PC-3 (cell line): ENCODE measurements at regions of chr13 and their contacts with region 1.

Region 1: DNA sequence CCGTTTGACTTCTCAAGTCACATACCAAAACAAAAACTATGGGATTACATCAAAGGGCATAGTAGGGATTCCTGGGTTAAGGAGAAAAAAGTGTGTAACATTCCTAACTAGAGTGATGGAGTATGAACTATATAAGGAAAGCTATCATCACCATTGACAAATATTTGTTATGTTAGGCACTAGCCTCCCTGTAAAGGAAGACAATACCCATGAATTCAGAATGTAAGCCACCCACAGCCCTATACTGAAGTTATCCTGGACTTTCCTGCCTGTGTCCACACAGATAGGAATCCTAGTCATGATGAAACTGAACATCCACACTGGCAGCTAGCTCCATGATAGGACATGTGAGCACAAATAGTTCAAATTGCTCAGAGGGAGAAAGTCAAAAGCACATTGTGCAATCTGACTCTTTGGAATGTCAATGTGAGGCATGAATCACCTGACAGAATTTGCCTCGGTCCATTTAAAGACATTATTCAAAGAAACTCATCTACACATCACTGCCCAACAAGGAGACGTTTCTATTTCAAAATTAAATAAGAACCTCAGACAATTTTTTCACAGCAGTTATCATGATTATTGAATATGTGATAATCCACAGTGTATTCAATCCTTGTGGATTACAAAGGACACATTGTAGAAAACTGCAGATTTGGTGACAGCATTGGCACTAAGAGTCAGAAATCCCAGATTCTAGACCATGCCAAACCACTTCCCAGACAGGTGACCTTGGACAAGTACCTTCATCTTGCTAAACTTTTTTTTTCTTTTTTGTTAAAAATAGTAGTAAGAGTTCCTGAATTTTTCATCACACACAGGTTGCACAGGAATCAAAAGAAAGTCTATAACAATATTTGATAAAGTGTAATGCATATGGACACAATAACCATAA is 529.3 kb downstream of the IRS2 start:
- DNase-seq: peak; percentile 93
- ATAC-seq: peak; percentile 88
- H3K4me3 ChIP-seq: no peak overlapping the region
- H3K27ac ChIP-seq: peak overlapping the region; percentile 85
- H3K4me1 ChIP-seq: peaks cover 32% of the 10 kb centered on the region
- H3K27me3 ChIP-seq: no peaks in the 10 kb centered on the region
- CTCF ChIP-seq: no peak

Region 2: DNA sequence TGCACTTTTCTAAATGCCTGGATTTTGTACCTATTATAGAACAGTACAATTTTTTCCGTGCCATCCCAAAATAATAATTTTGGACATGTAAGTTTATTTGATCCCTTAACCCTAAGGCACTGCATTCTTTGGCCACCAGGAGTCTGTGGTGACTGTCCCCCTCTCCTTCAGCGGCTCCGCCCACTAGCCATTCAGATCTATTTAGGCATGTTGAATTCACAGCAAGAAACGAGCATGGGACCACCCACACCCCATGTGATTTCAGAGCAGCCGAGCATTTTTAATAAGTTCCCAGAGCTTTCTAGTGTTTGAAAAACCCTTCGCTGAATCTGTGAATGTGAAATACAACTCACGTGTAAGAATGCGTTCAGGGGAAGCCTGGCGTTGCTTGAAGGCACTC is 60.2 kb before region 1 on chr13:
- CTCF ChIA-PET with region 1: no interaction called
- POLR2A ChIA-PET with region 1: no interaction called
- intact Hi-C with region 1: no loop called
- DNase-seq: no peak
- ATAC-seq: no peak
- H3K4me3 ChIP-seq: no peak overlapping the region
- H3K27ac ChIP-seq: no peak overlapping the region
- H3K4me1 ChIP-seq: no peaks in the 10 kb centered on the region
- H3K27me3 ChIP-seq: no peaks in the 10 kb centered on the region
- CTCF ChIP-seq: no peak; the same call in 1 of the 2 replicates

Region 3: GRCh38 chr13:109211616-109212015 is 45.5 kb before region 1 on chr13:
- CTCF ChIA-PET with region 1: no interaction called
- POLR2A ChIA-PET with region 1: no interaction called
- intact Hi-C with region 1: loop called (anchors 10 kb)
- DNase-seq: peak; percentile 85
- ATAC-seq: peak; percentile 83
- H3K4me3 ChIP-seq: no peak overlapping the region
- H3K27ac ChIP-seq: no peak overlapping the region
- H3K4me1 ChIP-seq: peaks cover 36% of the 10 kb centered on the region
- H3K27me3 ChIP-seq: no peaks in the 10 kb centered on the region
- CTCF ChIP-seq: no peak

Region 4: GRCh38 chr13:109243311-109243951 is 13.7 kb before region 1 on chr13:
- CTCF ChIA-PET with region 1: no interaction called
- POLR2A ChIA-PET with region 1: no interaction called
- intact Hi-C with region 1: loop called (anchors 1 kb)
- DNase-seq: peak; percentile 88
- ATAC-seq: peak; percentile 99
- H3K4me3 ChIP-seq: peak overlapping the region; percentile 26
- H3K27ac ChIP-seq: peak overlapping the region; percentile 77
- H3K4me1 ChIP-seq: peaks cover 23% of the 10 kb centered on the region
- H3K27me3 ChIP-seq: no peaks in the 10 kb centered on the region
- CTCF ChIP-seq: no peak